Colonic mucosa (tissue), 4 donors: ENCODE measurements at regions of chr12 and their contacts with region 1.

Region 1: GRCh38 chr12:133174901-133175300 is 6.4 kb upstream of the ZNF268 start:
- DNase-seq: no peak
- H3K4me3 ChIP-seq: no peak overlapping the region
- H3K27ac ChIP-seq: no peak overlapping the region
- H3K4me1 ChIP-seq: no peaks in the 10 kb centered on the region
- H3K27me3 ChIP-seq: no peaks in the 10 kb centered on the region
- CTCF ChIP-seq: no peak

Region 2: DNA sequence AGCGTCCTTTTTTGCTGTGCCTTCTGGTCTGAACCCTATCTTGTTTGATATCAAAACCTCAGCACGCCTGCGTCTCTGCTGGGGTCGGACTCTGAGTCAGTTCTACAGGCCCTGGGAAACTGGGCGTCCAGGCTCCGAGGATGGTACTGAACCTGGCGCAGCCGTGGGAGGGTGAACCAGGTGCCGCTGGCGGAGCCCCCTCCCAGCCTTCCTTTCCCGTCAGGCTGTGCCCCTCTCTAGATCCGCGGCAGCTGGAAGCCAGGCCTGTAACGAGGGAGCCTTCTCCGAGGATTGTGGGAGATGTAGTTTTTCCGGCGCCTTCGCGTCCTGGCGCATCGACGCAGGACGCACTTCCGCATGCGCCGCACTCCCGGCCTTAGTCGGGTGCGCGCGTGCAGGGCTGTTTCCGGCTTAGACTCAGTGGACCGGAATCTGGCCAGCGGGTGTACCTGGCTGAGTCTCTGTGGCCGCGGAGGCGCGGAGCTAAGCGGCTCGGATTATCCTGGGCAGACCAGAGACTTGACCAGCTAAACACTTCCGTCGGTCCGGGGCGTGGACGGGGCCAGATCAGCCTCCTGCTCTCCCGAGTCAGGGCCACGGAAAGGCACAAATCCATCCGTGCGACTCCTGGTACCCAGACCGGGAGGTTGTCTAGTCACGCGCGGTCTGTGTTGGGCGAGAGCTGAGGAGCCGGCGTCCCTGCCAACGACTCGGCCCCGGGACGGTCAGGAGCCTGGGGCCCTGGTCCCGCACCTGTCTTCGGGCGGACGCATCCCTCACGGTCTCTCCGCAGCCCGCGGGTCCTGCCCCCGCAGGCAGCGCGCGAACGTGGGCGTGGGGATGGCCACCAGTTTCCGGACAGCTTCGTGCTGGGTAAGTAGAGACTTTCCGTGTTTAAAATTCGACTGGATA is 188.6 kb before region 1 on chr12 and contains the start of gene ZNF26:
- intact Hi-C with region 1: loop called (anchors 5 kb)
- DNase-seq: peak; percentile 94
- H3K4me3 ChIP-seq: peak within 1 kb of the TSS; percentile 99
- H3K27ac ChIP-seq: peak within 1 kb of the TSS; percentile 46
- H3K4me1 ChIP-seq: no peaks in the 10 kb centered on the region
- H3K27me3 ChIP-seq: no peaks in the 10 kb centered on the region
- CTCF ChIP-seq: no peak
- total RNA-seq, gene ZNF26: 6.7 to 7.2 TPM